ENCODE measurements at regions of chr3 and their contacts with region 1.

Region 1: DNA sequence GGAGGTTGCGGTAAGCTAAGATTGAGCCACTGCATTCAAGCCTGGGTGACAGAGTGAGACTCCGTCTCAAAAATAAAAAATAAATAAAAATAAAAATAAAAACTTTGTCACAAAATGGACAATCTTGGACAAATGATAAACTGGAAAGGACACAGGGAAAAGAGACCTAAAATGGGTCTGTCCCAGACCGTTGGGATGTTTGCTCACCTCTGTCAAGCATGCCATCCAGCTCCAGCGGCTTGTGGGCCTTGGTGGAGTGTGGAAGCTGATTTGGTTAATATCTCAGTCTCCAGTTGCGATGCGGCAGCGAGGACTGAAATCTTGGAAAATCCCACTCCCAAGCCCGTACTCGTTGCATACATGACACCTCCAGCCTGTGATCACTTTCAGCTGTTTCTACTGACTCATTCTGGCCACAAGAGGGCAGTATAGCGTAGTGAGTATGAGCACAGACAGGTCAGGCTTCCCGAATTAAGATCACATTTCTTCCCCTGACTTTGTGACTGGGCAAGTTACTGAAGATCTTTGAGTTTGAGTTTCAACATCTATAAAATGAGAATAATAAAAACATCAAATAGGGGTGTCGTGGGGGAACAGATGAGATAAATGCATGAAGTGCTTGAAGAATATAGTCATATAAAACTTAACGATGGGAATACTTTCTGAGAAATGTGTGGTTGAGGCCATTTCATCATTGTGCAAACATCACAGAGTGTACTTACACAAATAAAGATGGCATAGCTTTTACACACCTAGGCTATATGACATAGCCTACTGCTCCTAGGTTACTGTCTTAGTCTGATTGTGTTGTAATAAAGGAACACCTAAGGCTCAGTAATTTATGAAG is 19.6 kb upstream of the MOBP start:
- DNase-seq: peak; percentile 37
- H3K4me3 ChIP-seq: no peak overlapping the region
- H3K27me3 ChIP-seq: peaks cover 2% of the 10 kb centered on the region; the same call in 1 of the 2 replicates
- CTCF ChIP-seq: peak; percentile 90

Region 2: GRCh38 chr3:39414421-39414907 is 33.4 kb before region 1 on chr3:
- CTCF ChIA-PET with region 1: interaction called, 20 read pairs
- POLR2A ChIA-PET with region 1: no interaction called
- DNase-seq: no peak
- H3K4me3 ChIP-seq: no peak overlapping the region
- H3K27me3 ChIP-seq: no peaks in the 10 kb centered on the region
- CTCF ChIP-seq: no peak

Region 3: GRCh38 chr3:39434574-39434973 is 13.3 kb before region 1 on chr3:
- CTCF ChIA-PET with region 1: interaction called, 25 read pairs
- POLR2A ChIA-PET with region 1: no interaction called
- DNase-seq: no peak
- H3K4me3 ChIP-seq: no peak overlapping the region
- H3K27me3 ChIP-seq: no peaks in the 10 kb centered on the region
- CTCF ChIP-seq: no peak

Region 4: GRCh38 chr3:39459026-39459425 is 11.2 kb after region 1 on chr3:
- CTCF ChIA-PET with region 1: interaction called, 25 read pairs
- POLR2A ChIA-PET with region 1: no interaction called
- DNase-seq: no peak
- H3K4me3 ChIP-seq: no peak overlapping the region
- H3K27me3 ChIP-seq: no peaks in the 10 kb centered on the region; the same call in 1 of the 2 replicates
- CTCF ChIP-seq: no peak

Region 5: GRCh38 chr3:39626198-39626597 is 178.3 kb after region 1 on chr3:
- CTCF ChIA-PET with region 1: no interaction called
- POLR2A ChIA-PET with region 1: no interaction called
- DNase-seq: no peak
- H3K4me3 ChIP-seq: no peak overlapping the region
- H3K27me3 ChIP-seq: peaks cover 1% of the 10 kb centered on the region; the same call in 1 of the 2 replicates
- CTCF ChIP-seq: no peak

Measured in BJ (cell line).